ENCODE measurements at regions of chr2 and their contacts with region 1.

Region 1: GRCh38 chr2:20051532-20052228 is at the start of gene LAPTM4A:
- DNase-seq: peak; percentile 100
- ATAC-seq: peak; percentile 97
- H3K4me3 ChIP-seq: peak within 1 kb of the TSS; percentile 84 to 97 (median 92)
- H3K27ac ChIP-seq: peak within 1 kb of the TSS; percentile 97
- H3K4me1 ChIP-seq: peaks cover 56% of the 10 kb centered on the region
- H3K27me3 ChIP-seq: peaks cover 0 to 3% of the 10 kb centered on the region in 2 experiments; a peak in 1 of 5 replicates
- CTCF ChIP-seq: peak; percentile 2; the same call in 1 of the 2 replicates
- EP300 ChIP-seq: peak; percentile 31 to 38; a peak in 1 of 4 replicates
- POLR2A ChIP-seq: peak; percentile 80 to 98
- RAD21 ChIP-seq: peak; percentile 63
- total RNA-seq, gene LAPTM4A: 82.8 and 116 TPM in 2 replicates

Region 2: GRCh38 chr2:19989681-19990415 is 61.8 kb before region 1 on chr2 and contains the start of gene WDR35:
- CTCF ChIA-PET with region 1: no interaction called
- POLR2A ChIA-PET with region 1: interaction called, 28 read pairs
- in situ Hi-C with region 1: no loop called
- intact Hi-C with region 1: loop called (anchors 2 kb)
- DNase-seq: peak; percentile 90
- ATAC-seq: peak; percentile 97
- H3K4me3 ChIP-seq: peak within 1 kb of the TSS; percentile 75 to 90 (median 78)
- H3K27ac ChIP-seq: peak within 1 kb of the TSS; percentile 70
- H3K4me1 ChIP-seq: peaks cover 30% of the 10 kb centered on the region
- H3K27me3 ChIP-seq: no peaks in the 10 kb centered on the region; a peak in 1 of 5 replicates
- CTCF ChIP-seq: peak; percentile 42
- EP300 ChIP-seq: peak in 1 of 2 experiments; percentile 9; a peak in 1 of 4 replicates
- POLR2A ChIP-seq: peak; percentile 88 to 99
- RAD21 ChIP-seq: peak; percentile 18; the same call in 1 of the 2 replicates
- total RNA-seq, gene WDR35: 19.6 and 26.6 TPM in 2 replicates

Region 3: DNA sequence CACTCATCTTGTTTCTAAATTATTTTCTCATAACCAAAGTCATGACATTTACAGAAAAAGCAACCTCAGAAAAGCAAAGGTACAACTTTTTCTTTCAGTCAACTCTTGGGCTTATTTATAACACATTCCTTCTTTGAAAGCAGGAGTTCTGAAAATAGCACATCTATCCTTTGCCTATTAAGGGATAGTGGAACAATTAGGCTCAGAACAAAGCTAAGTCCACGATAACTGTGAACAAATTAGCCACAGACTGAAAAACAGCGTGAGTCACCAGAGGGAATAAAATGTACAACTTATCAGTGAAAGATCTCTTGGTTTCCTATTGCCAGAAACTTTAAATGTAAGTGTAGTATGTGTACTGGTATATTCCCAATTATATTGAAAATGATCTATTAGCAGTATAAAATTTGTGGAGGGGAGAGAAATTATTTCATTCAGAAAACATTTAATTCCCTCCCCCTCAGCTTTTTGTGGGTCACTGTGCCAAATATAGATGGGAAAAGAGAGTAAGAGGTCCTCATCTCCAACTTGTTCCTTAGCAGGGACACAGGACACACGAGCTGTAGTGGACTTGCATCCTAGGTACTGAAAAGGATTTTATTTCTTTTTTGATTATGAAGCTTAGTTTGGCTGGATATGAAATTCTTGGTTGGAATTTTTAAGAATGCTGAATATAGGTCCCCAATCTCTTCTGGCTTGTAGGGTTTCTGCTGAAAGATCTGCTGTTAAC is 23.8 kb before region 1 on chr2:
- CTCF ChIA-PET with region 1: no interaction called
- POLR2A ChIA-PET with region 1: interaction called, 42 read pairs
- in situ Hi-C with region 1: no loop called
- intact Hi-C with region 1: no loop called
- DNase-seq: no peak
- ATAC-seq: peak; percentile 41
- H3K4me3 ChIP-seq: peak overlapping the region in 1 of 3 experiments; percentile 0; a peak in 1 of 6 replicates
- H3K27ac ChIP-seq: peak overlapping the region; percentile 53
- H3K4me1 ChIP-seq: peaks cover 21% of the 10 kb centered on the region
- H3K27me3 ChIP-seq: no peaks in the 10 kb centered on the region
- CTCF ChIP-seq: no peak
- EP300 ChIP-seq: no peak
- POLR2A ChIP-seq: no peak
- RAD21 ChIP-seq: no peak

Region 4: DNA sequence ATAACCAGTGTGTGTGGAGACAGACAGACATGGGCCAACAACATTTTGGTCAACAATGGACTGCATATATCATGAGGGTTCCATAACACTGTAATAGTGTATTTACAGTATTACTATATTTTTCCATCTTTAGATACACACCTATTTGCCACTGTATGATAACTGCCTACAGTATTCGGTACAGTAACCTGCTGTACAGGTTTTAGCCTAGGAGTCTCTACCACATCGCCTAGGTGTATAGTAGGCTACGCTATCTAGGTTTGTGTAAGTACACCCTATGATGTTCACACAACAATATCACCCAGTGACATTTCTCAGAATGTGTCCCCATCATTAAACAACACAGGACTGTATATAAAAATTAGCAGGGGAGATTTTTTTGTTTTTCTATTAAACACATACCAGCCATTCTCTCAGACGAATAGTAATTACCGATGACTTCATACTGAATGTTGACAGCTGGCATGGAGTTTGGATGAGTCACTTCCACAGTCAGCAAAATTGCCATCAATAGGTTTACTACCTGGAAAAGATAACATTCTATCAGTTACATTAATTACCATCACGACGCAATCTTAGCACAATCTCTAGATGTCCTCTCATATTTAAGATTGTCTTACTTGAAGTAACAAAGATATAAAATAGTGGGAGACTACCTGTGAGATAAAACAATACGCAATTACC is 11.0 kb before region 1 on chr2:
- CTCF ChIA-PET with region 1: no interaction called
- POLR2A ChIA-PET with region 1: interaction called, 13 read pairs
- in situ Hi-C with region 1: no loop called
- intact Hi-C with region 1: no loop called
- DNase-seq: no peak
- ATAC-seq: no peak
- H3K4me3 ChIP-seq: no peak overlapping the region
- H3K27ac ChIP-seq: no peak overlapping the region
- H3K4me1 ChIP-seq: peaks cover 32% of the 10 kb centered on the region
- H3K27me3 ChIP-seq: no peaks in the 10 kb centered on the region
- CTCF ChIP-seq: no peak
- EP300 ChIP-seq: no peak
- POLR2A ChIP-seq: no peak
- RAD21 ChIP-seq: no peak

Region 5: GRCh38 chr2:20071397-20072383 is 20.0 kb after region 1 on chr2:
- CTCF ChIA-PET with region 1: no interaction called
- POLR2A ChIA-PET with region 1: interaction called, 105 read pairs
- in situ Hi-C with region 1: no loop called
- intact Hi-C with region 1: loop called (anchors 2 kb)
- DNase-seq: peak; percentile 71
- ATAC-seq: peak; percentile 85
- H3K4me3 ChIP-seq: peak overlapping the region; percentile 50 to 60 (median 51)
- H3K27ac ChIP-seq: peak overlapping the region; percentile 34
- H3K4me1 ChIP-seq: peaks cover 67% of the 10 kb centered on the region
- H3K27me3 ChIP-seq: no peaks in the 10 kb centered on the region; a peak in 1 of 5 replicates
- CTCF ChIP-seq: no peak
- EP300 ChIP-seq: peak in 1 of 2 experiments; percentile 46; a peak in 1 of 4 replicates
- POLR2A ChIP-seq: no peak
- RAD21 ChIP-seq: no peak

Region 6: GRCh38 chr2:20091305-20091991 is 39.8 kb after region 1 on chr2:
- CTCF ChIA-PET with region 1: interaction called, 4 read pairs
- POLR2A ChIA-PET with region 1: interaction called, 18 read pairs
- in situ Hi-C with region 1: loop called (anchors 5 kb)
- intact Hi-C with region 1: loop called (anchors 1 kb)
- DNase-seq: no peak
- ATAC-seq: no peak
- H3K4me3 ChIP-seq: no peak overlapping the region; a peak in 1 of 6 replicates
- H3K27ac ChIP-seq: no peak overlapping the region
- H3K4me1 ChIP-seq: peaks cover 79% of the 10 kb centered on the region
- H3K27me3 ChIP-seq: no peaks in the 10 kb centered on the region; a peak in 1 of 5 replicates
- CTCF ChIP-seq: no peak
- EP300 ChIP-seq: no peak
- POLR2A ChIP-seq: no peak
- RAD21 ChIP-seq: no peak

Region 7: GRCh38 chr2:20108655-20109396 is 57.1 kb after region 1 on chr2:
- CTCF ChIA-PET with region 1: no interaction called
- POLR2A ChIA-PET with region 1: interaction called, 15 read pairs
- in situ Hi-C with region 1: no loop called
- intact Hi-C with region 1: no loop called
- DNase-seq: peak; percentile 78
- ATAC-seq: peak; percentile 51
- H3K4me3 ChIP-seq: peak overlapping the region; percentile 38 to 59 (median 44)
- H3K27ac ChIP-seq: peak overlapping the region; percentile 58
- H3K4me1 ChIP-seq: peaks cover 82% of the 10 kb centered on the region
- H3K27me3 ChIP-seq: no peaks in the 10 kb centered on the region
- CTCF ChIP-seq: peak; percentile 22; the same call in 1 of the 2 replicates
- EP300 ChIP-seq: peak in 1 of 2 experiments; percentile 56; a peak in 2 of 4 replicates
- POLR2A ChIP-seq: no peak
- RAD21 ChIP-seq: no peak